ENCODE measurements at regions of chr3 and their contacts with region 1.

Region 1: DNA sequence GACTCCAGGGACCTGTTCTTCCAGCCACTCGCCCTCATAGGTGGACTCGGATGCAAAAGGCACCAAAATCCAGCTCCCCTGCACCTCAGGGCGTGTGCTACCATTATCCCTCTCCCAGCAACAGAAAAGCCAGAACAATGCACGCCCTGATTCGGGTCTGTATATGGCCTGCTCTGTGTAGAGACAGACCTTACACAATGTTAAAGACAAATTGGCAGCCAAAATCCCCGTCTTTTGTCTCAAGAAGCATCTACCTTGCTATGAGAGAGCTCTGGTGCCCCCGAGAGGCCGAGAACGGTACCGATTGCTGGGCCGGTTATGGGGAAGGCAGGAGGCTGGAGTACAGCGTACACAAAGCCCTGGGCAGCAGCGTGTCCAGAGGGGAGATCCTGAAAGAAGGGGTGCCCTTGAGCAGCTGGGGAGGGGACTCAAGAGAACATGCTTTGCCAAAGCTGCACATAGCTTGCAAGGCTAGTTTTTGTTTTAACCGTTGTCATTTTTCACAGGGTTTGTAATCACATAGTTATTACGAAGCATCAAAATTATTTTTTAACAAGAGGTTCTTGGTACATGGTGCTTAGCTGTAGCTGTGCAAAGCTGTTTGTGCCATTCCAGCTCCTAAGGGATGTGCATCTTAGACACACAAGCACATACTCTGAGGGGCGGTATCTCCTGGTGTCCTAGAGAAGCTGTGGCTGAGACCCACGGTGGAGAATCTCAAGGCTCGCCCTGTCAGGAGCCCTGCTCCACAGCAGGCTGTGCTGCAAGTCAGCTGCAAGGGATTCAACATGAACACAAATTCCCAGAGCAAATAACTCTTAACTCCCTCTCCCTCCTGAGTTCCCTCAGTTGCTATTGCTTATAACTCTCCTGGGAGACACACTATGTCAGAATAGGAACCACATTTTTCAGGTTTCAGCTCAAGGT is 461.5 kb upstream of the PPP2R3A start:
- DNase-seq: peak in 1 of 2 experiments; percentile 55
- H3K4me3 ChIP-seq: no peak overlapping the region
- H3K27ac ChIP-seq: no peak overlapping the region
- H3K4me1 ChIP-seq: no peaks in the 10 kb centered on the region
- H3K27me3 ChIP-seq: peaks cover 75% of the 10 kb centered on the region
- CTCF ChIP-seq: peak; percentile 71

Region 2: DNA sequence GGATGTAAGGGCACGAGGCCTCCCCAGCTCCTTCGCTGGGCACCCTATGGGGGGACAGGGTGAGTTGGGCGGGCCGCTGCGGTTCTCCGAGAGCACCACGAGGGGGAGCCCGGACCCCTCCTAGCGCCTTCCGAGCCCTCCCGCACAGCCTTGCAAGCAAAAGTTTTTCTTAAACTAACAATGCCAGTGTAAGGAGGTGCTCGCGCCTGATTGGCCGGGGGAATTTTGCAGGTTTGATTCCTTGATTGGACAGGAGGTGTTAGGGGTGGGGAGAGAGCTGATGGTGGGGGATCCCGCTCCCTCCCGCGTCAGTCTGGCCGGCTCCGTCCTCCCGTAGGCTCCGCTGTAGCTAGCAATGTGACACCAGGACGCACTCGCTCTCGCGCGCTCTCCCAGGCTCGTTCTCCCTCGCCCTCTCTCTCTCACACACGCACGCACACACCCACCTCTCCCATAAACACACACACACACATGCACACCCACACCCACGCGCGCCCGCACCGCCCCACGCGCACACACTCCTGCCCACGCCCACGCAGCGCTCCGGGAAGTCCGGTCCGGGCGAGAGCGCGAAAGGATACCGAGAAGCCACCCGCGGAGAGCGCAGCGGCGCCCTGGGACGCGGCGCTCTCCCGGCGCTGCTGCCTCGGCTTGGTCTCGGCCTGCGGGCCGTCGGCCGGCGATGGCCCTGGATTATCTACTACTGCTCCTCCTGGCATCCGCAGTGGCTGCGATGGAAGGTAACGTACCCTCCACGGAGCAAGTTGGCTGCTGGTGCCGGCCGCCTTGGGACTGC is 708.9 kb before region 1 on chr3 and contains the start of gene EPHB1:
- CTCF ChIA-PET with region 1: no interaction called
- POLR2A ChIA-PET with region 1: no interaction called
- intact Hi-C with region 1: loop called (anchors 2 kb)
- DNase-seq: peak in 1 of 2 experiments; percentile 60
- H3K4me3 ChIP-seq: no peak within 1 kb of the TSS
- H3K27ac ChIP-seq: no peak within 1 kb of the TSS
- H3K4me1 ChIP-seq: no peaks in the 10 kb centered on the region
- H3K27me3 ChIP-seq: peaks cover 35% of the 10 kb centered on the region
- CTCF ChIP-seq: peak; percentile 78
- total RNA-seq, gene EPHB1: 0.15 TPM in 1 of 2 replicates, not detected in the other

Region 3: GRCh38 chr3:135597855-135598254 is 93.8 kb after region 1 on chr3:
- CTCF ChIA-PET with region 1: no interaction called
- POLR2A ChIA-PET with region 1: no interaction called
- intact Hi-C with region 1: no loop called
- DNase-seq: no peak
- H3K4me3 ChIP-seq: no peak overlapping the region
- H3K27ac ChIP-seq: no peak overlapping the region
- H3K4me1 ChIP-seq: no peaks in the 10 kb centered on the region
- H3K27me3 ChIP-seq: peaks cover 34% of the 10 kb centered on the region; the same call in 1 of the 2 replicates
- CTCF ChIP-seq: no peak

Region 4: DNA sequence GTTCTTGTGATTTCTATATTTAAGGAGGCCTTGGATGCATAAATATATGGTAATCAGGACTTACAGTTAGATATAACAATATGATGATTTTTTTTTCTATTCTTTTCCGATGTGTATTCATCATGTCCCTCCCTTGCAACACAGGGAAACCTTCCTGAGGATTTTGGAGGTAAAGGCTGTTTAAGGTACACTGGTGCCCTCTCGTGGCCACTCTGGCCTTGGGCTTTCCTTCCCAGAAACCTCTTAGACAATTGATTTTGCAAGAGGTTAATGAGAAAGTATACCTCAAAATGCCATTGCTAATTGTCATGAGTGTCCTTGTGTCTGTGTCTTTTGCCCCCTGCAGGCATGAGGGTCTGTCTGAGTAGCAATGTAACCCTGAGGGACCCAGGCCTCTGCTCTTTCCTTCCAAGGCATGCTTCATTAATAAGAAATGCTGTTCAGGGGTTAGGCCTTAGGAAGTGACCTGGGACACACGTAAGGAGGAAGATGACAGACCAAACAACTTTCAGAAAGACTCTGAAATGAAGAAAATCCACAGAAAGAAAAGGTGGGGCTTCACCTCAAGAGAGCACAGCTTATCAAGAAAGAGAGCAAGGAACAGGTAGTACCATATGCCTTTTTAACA is 391.2 kb after region 1 on chr3:
- CTCF ChIA-PET with region 1: no interaction called
- POLR2A ChIA-PET with region 1: no interaction called
- intact Hi-C with region 1: loop called (anchors 10 kb)
- DNase-seq: peak; percentile 70 to 76
- H3K4me3 ChIP-seq: no peak overlapping the region
- H3K27ac ChIP-seq: no peak overlapping the region
- H3K4me1 ChIP-seq: peaks cover 20% of the 10 kb centered on the region
- H3K27me3 ChIP-seq: no peaks in the 10 kb centered on the region
- CTCF ChIP-seq: peak; percentile 90

Measured in PC-9 (cell line).